ENCODE measurements at regions of chr18 and their contacts with region 1.

Region 1: GRCh38 chr18:51051105-51051712 is 21.2 kb downstream of the SMAD4 start:
- DNase-seq: no peak
- H3K4me3 Mint-ChIP-seq: no peak overlapping the region
- H3K27ac Mint-ChIP-seq: no peak overlapping the region
- H3K4me1 Mint-ChIP-seq: peaks cover 24% of the 10 kb centered on the region
- H3K27me3 Mint-ChIP-seq: no peaks in the 10 kb centered on the region

Region 2: GRCh38 chr18:50819728-50820378 is 231.4 kb before region 1 on chr18 and contains the start of gene MRO:
- CTCF ChIA-PET with region 1: interaction called, 21 read pairs
- intact Hi-C with region 1: loop called (anchors 1 kb)
- DNase-seq: peak; percentile 83
- H3K4me3 Mint-ChIP-seq: no peak within 1 kb of the TSS
- H3K27ac Mint-ChIP-seq: no peak within 1 kb of the TSS
- H3K4me1 Mint-ChIP-seq: no peaks in the 10 kb centered on the region
- H3K27me3 Mint-ChIP-seq: peaks cover 6% of the 10 kb centered on the region
- total RNA-seq, gene MRO: not detected

Region 3: DNA sequence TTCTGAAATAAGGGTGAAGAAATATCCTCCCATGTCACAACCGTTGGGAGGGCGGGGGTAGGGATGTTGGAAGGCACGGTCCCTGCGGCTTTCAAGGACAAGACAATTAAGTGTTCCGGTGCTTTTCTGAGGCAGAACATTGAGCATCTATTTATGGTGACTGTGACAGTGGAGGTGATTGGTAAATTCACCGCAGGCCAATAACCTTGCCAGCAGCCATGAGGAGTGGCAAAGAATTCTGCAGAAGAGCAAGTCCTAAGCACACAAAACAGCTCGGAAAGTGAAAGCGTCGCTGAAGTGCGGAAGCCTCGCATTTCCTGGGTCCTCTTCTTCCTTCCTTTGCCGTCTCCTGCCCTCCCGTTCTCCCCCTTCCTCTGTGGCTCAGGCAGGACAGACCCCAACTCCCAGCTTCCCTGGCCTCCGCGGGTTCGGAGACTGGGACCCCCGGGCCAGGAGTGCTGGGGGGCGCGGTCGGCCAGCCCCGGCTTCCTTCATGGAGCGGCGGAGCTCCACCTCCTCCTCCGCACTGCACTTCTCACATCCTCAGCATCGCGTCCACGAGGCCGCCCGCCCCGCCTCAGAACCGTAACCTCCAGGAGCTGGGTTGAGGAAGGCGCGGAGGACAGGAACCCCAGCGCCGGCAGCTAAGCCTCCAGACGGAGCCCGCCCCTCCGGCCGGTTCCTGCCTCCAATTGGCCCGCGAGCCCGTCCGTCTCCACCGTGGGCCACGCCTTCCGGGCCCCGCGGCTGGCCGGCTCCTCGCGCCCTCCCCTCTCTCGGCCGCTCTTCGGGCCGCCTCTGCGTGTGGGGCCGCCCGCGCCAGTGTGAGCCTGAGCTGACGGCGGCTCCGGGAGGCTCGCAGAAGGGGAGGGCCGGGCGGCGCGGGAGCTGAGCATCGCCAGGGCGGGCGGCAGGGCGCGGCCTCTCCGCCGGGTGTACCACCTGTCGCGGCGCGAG is 172.6 kb before region 1 on chr18 and contains the start of gene ME2:
- CTCF ChIA-PET with region 1: interaction called, 5 read pairs
- intact Hi-C with region 1: loop called (anchors 1 kb)
- DNase-seq: peak; percentile 90
- H3K4me3 Mint-ChIP-seq: peak within 1 kb of the TSS; percentile 98
- H3K27ac Mint-ChIP-seq: peak within 1 kb of the TSS; percentile 99
- H3K4me1 Mint-ChIP-seq: peaks cover 27% of the 10 kb centered on the region
- H3K27me3 Mint-ChIP-seq: peaks cover 3% of the 10 kb centered on the region
- total RNA-seq, gene ME2: 137 to 146 TPM

Region 4: DNA sequence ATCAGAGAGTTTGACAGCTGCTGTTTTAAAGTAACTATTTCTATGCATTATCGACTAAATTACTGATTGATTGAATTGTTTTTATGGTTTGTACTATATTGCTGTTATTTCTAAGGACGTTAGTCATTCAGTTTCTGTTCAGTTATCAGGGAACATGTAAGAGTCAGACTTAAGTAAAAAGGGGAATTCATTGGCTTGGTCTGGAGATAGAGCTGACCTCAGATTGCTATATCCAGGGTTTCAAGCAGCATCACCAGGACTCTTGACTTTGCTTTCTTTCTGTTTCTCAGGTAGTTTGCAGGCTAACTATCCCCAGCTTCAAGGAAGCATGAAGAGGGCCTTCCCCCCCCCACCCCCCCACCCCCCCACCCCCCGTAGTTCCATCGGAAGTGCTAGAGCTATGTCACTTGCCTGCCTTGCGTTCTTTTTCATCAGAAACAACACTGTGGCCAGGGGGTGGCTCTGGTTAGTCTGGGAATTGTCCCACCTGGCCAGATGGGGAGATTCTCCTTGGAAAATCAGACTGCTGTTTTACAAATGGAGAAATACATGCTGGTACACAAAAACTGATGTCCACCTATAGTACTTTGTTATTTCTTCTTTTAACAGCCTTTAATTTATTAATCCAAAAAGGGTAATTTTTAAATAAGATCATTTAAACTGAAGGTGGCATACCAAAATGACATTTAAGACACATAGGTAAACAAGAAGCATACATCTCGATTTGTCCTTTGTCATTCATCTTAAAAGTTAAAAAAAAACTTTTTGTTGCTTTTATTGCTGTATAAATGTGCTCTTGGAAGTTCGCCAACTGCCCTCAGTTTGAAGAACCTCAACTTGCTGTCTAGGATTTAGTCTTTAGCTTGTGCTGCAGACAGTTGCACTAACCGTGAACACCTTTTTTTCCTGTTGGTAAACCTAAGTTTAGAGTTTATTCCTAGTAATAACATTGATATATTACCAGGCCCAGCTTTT is 11.8 kb before region 1 on chr18:
- CTCF ChIA-PET with region 1: interaction called, 11 read pairs
- intact Hi-C with region 1: no loop called
- DNase-seq: peak; percentile 27
- H3K4me3 Mint-ChIP-seq: no peak overlapping the region
- H3K27ac Mint-ChIP-seq: peak overlapping the region; percentile 61
- H3K4me1 Mint-ChIP-seq: peaks cover 86% of the 10 kb centered on the region
- H3K27me3 Mint-ChIP-seq: no peaks in the 10 kb centered on the region

Measured in activated naive CD4-positive, alpha-beta T cell treated with anti-CD3 and anti-CD28 coated beads for 36 hours (primary cell).